Activated T-helper 1 cell treated with anti-CD3 and anti-CD28 coated beads, Interleukin-12 subunit alpha, Interleukin-12 subunit beta, Interleukin-2, Interleukin-4 antibody, amounts not matched to agents 30 ng/mL and 10 ng/mL and 1 ng/mL, durations not matched to agents 14 hours and 24 hours and 36 hours (primary cell): ENCODE measurements at regions of chr22 and their contacts with region 1.

Region 1: DNA sequence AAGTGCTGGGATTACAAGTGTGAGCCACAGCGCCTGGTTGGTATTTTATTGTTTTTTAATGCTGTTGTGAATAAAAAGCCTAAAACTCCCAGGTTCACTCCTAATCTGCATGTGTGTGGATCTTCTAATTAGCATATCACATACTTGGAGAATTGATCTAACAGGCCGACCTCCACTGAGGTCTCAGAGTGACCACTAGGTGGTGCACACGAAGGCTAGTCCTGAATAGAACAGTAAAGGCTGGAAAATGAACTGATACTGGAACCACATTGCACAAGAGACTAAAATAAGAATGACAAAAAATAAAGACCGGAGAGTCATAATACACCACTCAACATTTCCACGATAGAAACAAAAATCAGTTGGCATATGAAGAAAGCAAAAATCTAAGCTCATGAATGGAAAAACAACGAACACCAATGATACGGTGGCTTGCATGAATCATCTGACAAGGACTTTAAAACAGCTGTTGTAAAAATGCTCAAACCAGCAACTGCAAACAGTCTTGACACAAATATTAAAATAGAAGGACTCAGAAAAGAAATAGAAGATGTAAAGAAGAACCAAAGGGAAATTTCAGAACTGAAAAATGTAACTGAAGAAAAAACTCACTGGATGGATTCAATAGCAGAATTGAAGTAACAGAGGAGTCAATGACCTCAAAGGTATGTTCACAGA is 19.2 kb downstream of the PIM3 start:
- DNase-seq: no peak
- H3K4me3 Mint-ChIP-seq: peak overlapping the region; percentile 1
- H3K27ac Mint-ChIP-seq: peak overlapping the region; percentile 70
- H3K4me1 Mint-ChIP-seq: peaks cover 37% of the 10 kb centered on the region
- H3K27me3 Mint-ChIP-seq: peaks cover 9% of the 10 kb centered on the region

Region 2: DNA sequence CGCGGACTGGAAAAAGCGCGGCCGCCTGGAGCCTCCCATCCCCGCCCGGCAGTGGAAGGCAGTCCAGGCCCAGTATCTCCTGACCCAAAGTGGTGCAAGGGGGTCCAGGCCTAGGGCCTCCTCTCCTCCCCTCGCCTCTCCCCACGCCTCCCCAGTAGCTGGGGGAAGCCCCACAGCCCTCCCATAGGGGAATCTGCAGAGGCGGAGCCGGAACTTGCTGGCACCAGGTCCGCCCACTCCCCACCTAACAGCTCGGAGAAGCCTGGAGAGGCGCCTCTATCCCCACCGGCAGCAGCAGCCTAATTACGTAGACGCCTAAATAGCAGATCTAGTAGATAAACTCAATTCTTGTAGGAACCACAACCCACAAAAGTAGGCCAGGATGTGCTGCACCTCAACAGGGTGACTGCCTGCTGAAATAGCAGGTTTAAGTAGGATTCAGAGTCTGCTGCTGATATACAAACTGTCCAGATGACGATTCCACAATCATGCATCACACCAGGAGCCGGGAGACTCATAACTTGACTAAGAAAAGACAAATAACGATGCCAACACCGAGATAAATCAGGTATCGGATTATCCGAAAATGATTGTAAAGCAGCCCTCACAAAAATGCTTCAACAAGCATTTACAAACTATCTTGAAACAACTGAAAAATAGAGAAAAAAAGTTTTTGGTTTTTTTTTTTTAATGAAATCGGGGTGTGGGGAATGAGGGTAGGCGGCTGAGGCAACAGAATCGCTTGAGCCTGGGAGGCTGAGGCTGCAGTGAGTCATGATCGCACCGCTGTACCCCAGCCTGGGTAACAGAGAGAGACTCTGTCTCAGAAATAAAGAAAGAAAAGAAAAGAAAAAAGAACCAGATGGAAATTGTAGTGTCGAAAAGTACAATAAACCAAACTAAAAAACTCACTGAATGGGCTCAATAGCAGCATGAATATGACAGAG is 140.7 kb before region 1 on chr22:
- intact Hi-C with region 1: loop called (anchors 5 kb)
- DNase-seq: peak; percentile 85
- H3K4me3 Mint-ChIP-seq: peak overlapping the region; percentile 68
- H3K27ac Mint-ChIP-seq: peak overlapping the region; percentile 87
- H3K4me1 Mint-ChIP-seq: peaks cover 28% of the 10 kb centered on the region
- H3K27me3 Mint-ChIP-seq: peaks cover 4% of the 10 kb centered on the region

Region 3: DNA sequence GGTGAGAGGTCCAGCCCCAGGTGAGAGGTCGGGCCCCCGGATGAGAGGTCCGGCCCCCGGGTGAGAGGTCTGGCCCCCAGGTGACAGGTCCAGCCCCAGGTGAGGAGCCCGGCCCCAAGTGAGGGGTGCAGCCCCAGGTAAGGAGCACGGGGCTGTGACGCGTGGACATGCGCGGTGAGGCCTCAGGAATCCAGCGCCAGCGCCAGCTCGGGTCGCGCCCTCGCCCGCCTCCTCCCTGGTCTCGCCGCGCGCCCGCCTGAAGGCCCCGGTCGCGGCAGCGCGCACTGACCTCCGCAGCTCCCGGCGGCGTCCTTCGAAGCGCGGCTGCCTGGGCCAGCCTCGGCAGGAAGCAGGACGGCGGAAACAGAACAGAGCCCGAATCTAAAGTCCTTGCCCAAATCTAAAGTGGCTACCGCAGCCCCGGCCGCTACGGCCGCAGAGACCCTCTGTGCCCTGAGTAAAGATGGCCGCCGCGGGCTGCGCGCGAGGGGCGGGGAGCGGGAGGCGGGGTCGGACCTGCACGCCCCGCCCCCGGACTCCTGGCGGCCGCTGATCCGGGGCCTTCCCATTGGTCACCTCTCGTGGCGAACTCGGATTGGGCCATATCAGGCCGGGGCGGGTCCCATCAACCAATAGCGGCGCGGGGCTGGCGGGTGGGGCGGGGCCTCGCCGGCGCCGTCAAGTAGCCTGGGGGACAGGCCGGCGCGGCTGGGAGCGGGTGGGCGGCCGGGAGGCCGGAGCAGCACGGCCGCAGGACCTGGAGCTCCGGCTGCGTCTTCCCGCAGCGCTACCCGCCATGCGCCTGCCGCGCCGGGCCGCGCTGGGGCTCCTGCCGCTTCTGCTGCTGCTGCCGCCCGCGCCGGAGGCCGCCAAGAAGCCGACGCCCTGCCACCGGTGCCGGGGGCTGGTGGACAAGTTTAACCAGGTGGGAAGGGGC is 61.5 kb before region 1 on chr22 and contains the starts of genes ALG12 and CRELD2:
- intact Hi-C with region 1: loop called (anchors 2 kb)
- DNase-seq: peak; percentile 96
- H3K4me3 Mint-ChIP-seq: peak within 1 kb of the TSS; percentile 89
- H3K27ac Mint-ChIP-seq: peak within 1 kb of the TSS; percentile 87
- H3K4me1 Mint-ChIP-seq: peaks cover 16% of the 10 kb centered on the region
- H3K27me3 Mint-ChIP-seq: no peaks in the 10 kb centered on the region
- total RNA-seq, gene ALG12: 13.1 and 18.5 TPM in 2 replicates
- total RNA-seq, gene CRELD2: 48.1 and 51.0 TPM in 2 replicates

Region 4: GRCh38 chr22:49960159-49961004 is 19.3 kb before region 1 on chr22 and contains the start of gene PIM3:
- intact Hi-C with region 1: loop called (anchors 2 kb)
- DNase-seq: peak; percentile 93
- H3K4me3 Mint-ChIP-seq: peak within 1 kb of the TSS; percentile 90
- H3K27ac Mint-ChIP-seq: peak within 1 kb of the TSS; percentile 95
- H3K4me1 Mint-ChIP-seq: peaks cover 26% of the 10 kb centered on the region
- H3K27me3 Mint-ChIP-seq: no peaks in the 10 kb centered on the region
- total RNA-seq, gene PIM3: 290 and 291 TPM in 2 replicates

Region 5: GRCh38 chr22:49992921-49993648 is 13.4 kb after region 1 on chr22:
- intact Hi-C with region 1: loop called (anchors 2 kb)
- DNase-seq: peak; percentile 48
- H3K4me3 Mint-ChIP-seq: no peak overlapping the region
- H3K27ac Mint-ChIP-seq: no peak overlapping the region
- H3K4me1 Mint-ChIP-seq: peaks cover 10% of the 10 kb centered on the region
- H3K27me3 Mint-ChIP-seq: peaks cover 3% of the 10 kb centered on the region

Region 6: DNA sequence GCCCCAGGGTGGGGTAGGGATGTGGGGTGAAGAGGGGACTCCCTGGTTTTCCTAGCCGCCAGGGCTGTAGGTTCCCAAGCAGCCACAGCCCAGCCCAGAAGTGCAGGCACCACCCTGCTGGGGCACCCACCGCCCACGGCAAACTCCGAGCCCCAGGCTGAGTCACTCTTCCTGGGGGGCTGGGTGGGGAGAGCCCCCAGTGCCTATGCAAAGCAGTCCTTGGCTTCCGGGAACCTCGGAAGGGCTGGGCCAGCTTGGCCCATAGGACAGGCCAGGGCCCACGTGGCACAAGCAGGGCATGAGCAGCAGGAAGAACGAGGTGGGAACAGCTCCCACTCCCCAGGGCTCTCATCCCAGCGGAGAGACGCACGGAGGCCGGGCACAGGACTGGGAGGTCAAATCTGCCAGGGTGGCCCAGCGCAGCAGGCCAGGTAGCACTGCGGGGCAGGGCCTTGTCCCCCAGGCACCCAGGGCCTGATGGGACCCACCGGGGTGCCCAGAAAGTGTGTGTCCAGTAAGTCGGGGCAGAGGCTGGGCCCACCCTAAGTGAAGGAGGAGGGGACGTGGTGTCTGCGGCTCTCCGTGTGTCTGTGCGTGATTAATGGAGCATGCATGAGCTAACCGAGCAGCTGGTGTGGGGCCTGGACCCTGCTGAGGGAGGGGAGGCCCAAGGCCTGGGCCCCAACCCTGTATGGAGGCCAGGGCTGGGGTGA is 37.4 kb after region 1 on chr22:
- intact Hi-C with region 1: loop called (anchors 2 kb)
- DNase-seq: no peak
- H3K4me3 Mint-ChIP-seq: peak overlapping the region; percentile 19
- H3K27ac Mint-ChIP-seq: peak overlapping the region; percentile 45
- H3K4me1 Mint-ChIP-seq: peaks cover 9% of the 10 kb centered on the region
- H3K27me3 Mint-ChIP-seq: peaks cover 2% of the 10 kb centered on the region

Region 7: DNA sequence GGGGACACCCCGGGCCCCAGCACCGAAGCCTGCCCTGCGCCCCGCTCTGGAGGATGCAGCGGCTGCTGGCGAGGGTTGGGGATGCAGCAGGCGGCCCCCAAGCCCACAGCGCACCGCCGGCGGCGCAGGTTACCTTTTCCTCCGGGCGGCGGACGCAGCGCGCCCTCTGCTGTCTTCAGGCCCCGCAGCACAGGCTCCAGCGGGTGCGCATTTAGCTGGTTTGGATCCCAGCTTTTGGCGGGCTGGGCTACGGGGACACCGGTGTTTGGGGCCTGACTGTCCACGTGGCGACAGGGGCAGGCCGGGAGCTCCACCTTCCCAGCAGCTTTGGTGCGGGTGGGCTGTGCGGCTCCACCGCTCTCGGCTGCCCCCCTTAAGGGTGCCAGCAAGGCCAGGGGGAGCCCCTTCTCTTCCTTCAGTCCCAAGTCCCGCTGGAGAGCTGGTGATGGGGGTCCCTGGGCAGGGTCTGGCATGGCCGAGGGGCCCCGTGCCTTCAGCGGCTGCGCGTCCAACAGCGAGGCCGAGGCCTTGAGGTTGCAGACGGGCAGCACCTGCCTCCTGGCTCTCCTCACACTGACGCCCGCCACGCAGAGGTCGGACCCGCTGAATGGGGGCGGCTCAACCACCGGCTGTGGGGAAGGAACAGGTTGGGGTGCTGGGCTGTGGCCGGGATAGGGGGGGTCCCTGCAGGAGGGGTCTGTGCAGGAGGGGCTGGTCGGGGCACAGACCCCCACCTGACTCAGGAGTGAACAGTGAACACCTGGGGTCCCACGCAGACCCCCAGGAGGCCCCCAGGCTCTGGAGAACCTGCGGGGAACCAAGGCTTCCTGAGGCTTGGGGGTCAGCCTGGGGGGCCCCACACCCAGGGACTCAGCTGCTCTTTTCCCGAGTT is 50.8 kb after region 1 on chr22:
- intact Hi-C with region 1: loop called (anchors 2 kb)
- DNase-seq: peak; percentile 76
- H3K4me3 Mint-ChIP-seq: no peak overlapping the region
- H3K27ac Mint-ChIP-seq: no peak overlapping the region
- H3K4me1 Mint-ChIP-seq: peaks cover 8% of the 10 kb centered on the region
- H3K27me3 Mint-ChIP-seq: peaks cover 5% of the 10 kb centered on the region

Region 8: GRCh38 chr22:50061824-50062355 is 82.2 kb after region 1 on chr22:
- intact Hi-C with region 1: no loop called
- DNase-seq: no peak
- H3K4me3 Mint-ChIP-seq: no peak overlapping the region
- H3K27ac Mint-ChIP-seq: no peak overlapping the region
- H3K4me1 Mint-ChIP-seq: no peaks in the 10 kb centered on the region
- H3K27me3 Mint-ChIP-seq: peaks cover 13% of the 10 kb centered on the region